GM12878 (cell line): ENCODE measurements at regions of chr2 and their contacts with region 1.

Region 1: DNA sequence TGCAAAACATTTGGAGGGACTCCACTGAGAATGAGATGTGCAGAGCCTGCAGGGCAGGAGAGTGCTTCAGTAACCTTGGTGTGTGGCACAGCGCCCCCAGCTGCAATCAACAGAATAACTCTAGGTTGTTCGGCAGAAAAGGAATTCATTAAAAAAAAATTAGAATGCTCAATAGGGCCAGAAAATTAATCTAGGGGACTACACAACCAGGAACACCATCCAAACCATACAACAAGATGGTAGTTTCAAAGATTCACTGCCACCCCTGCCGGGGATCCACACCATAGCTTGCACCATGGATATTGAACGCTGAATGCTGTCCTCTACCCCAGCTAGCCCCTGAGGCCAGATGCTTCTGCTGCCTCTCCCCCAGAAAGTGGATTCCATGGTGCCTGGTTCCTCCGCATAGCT is 50.1 kb downstream of the THUMPD2 start:
- DNase-seq: no peak
- ATAC-seq: peak; percentile 86
- H3K4me3 ChIP-seq: no peak overlapping the region
- H3K27ac ChIP-seq: no peak overlapping the region
- H3K4me1 ChIP-seq: no peaks in the 10 kb centered on the region
- H3K27me3 ChIP-seq: no peaks in the 10 kb centered on the region
- CTCF ChIP-seq: peak; percentile 60 to 76 (median 75)
- EP300 ChIP-seq: no peak
- POLR2A ChIP-seq: no peak
- RAD21 ChIP-seq: peak; percentile 59

Region 2: GRCh38 chr2:39069136-39069515 is 659.8 kb before region 1 on chr2:
- CTCF ChIA-PET with region 1: no interaction called
- POLR2A ChIA-PET with region 1: no interaction called
- RAD21 ChIA-PET with region 1: no interaction called
- SMC1A ChIA-PET with region 1: no interaction called
- in situ Hi-C with region 1: loop called (anchors 25 kb)
- intact Hi-C with region 1: loop called (anchors 5 kb)
- DNase-seq: no peak
- ATAC-seq: no peak
- H3K4me3 ChIP-seq: no peak overlapping the region
- H3K27ac ChIP-seq: no peak overlapping the region
- H3K4me1 ChIP-seq: no peaks in the 10 kb centered on the region
- H3K27me3 ChIP-seq: no peaks in the 10 kb centered on the region
- CTCF ChIP-seq: no peak; a peak in 1 of 6 replicates
- EP300 ChIP-seq: no peak
- POLR2A ChIP-seq: no peak
- RAD21 ChIP-seq: peak; percentile 32; the same call in 1 of the 2 replicates

Region 3: GRCh38 chr2:39394516-39394961 is 334.4 kb before region 1 on chr2:
- CTCF ChIA-PET with region 1: interaction called, 12 read pairs
- POLR2A ChIA-PET with region 1: no interaction called
- RAD21 ChIA-PET with region 1: no interaction called
- SMC1A ChIA-PET with region 1: no interaction called
- in situ Hi-C with region 1: loop called (anchors 10 kb)
- intact Hi-C with region 1: no loop called
- DNase-seq: no peak
- ATAC-seq: no peak
- H3K4me3 ChIP-seq: no peak overlapping the region
- H3K27ac ChIP-seq: no peak overlapping the region
- H3K4me1 ChIP-seq: no peaks in the 10 kb centered on the region
- H3K27me3 ChIP-seq: no peaks in the 10 kb centered on the region
- CTCF ChIP-seq: no peak
- EP300 ChIP-seq: no peak
- POLR2A ChIP-seq: no peak
- RAD21 ChIP-seq: no peak

Region 4: DNA sequence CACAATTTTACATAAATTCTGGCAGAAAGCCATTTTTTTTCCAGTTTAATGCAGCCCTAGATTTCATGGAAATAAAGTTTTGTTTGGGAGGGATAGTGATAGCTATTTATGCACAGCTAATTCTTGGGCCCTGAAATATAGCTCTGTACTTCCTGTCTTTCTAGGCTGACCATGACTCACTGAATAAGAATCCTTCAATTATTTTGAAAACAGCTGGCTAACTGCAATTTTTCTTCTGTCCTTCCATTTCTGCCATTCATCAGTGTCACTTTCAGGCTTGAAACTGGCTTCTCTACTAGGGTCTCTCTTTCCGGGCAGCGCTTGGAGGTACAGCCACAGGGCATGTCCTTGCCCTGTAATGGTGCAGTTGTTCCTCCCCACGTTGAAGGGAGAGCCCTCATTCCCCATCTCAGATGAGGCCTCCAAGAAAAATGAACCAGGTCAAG is 160.4 kb before region 1 on chr2:
- CTCF ChIA-PET with region 1: no interaction called
- POLR2A ChIA-PET with region 1: no interaction called
- RAD21 ChIA-PET with region 1: no interaction called
- SMC1A ChIA-PET with region 1: no interaction called
- in situ Hi-C with region 1: no loop called
- intact Hi-C with region 1: no loop called
- DNase-seq: no peak
- ATAC-seq: no peak
- H3K4me3 ChIP-seq: no peak overlapping the region
- H3K27ac ChIP-seq: no peak overlapping the region
- H3K4me1 ChIP-seq: no peaks in the 10 kb centered on the region
- H3K27me3 ChIP-seq: 0 out of 4 replicates have a peak, but pooled peaks cover 0 to 2% of the 10 kb centered on the region in 2 experiments
- CTCF ChIP-seq: no peak
- EP300 ChIP-seq: no peak
- POLR2A ChIP-seq: no peak
- RAD21 ChIP-seq: no peak

Region 5: DNA sequence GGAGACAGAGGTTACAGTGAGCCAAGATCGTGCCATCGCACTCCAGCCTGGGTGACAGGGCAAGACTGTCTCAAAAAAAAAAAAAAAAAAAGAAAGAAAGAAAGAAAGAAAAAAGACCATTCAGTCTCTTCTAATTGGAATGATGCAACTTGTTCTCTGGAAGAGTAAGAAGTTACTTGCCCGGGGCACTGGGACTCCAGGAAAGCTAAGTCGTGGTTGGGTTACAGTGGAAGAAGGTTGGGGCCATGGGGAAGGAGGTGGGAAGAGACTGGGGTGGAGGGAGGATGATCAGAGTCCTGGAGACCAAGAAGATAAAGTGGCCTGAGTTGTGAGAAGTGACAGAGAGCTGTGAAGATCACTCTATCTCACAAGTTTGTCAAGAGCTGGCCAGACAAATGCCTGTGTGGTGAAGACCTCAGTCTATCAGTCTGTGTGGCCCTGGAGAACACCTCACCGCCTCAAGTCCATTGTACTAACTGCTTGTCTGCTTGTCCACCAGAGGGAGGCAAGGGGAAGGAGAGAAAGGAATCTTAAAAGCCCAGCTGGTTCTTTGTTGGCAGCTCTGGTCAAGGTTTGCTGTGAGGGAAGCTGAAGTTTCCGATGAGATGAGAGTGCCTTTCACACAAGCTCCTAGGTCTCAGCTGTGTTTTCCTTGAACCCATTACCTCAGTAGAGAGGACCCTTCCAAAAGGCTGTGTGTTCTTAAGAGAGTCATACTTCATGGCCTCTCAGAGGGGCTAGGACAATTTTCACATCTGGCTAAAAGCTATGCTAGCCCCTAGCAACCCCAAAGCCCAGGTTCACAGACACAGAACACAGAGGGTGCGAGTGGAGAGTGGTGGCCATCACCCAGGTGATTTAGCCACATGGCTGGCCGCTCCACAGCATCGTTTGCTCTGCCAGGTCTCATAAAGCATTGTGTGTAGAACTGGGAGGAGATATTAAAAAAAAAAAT is 135.2 kb before region 1 on chr2:
- CTCF ChIA-PET with region 1: interaction called, 13 read pairs
- POLR2A ChIA-PET with region 1: no interaction called
- RAD21 ChIA-PET with region 1: interaction called, 3 read pairs
- SMC1A ChIA-PET with region 1: no interaction called
- in situ Hi-C with region 1: no loop called
- intact Hi-C with region 1: no loop called
- DNase-seq: no peak
- ATAC-seq: peak; percentile 48
- H3K4me3 ChIP-seq: no peak overlapping the region
- H3K27ac ChIP-seq: no peak overlapping the region
- H3K4me1 ChIP-seq: no peaks in the 10 kb centered on the region
- H3K27me3 ChIP-seq: no peaks in the 10 kb centered on the region; a peak in 2 of 4 replicates
- CTCF ChIP-seq: peak; percentile 20 to 39 (median 26); a peak in 3 of 6 replicates
- EP300 ChIP-seq: no peak
- POLR2A ChIP-seq: no peak
- RAD21 ChIP-seq: 0 out of 2 replicates have a peak, but pooled peaks have one; percentile 30

Region 6: GRCh38 chr2:39679805-39680204 is 49.1 kb before region 1 on chr2:
- CTCF ChIA-PET with region 1: no interaction called
- POLR2A ChIA-PET with region 1: no interaction called
- RAD21 ChIA-PET with region 1: no interaction called
- SMC1A ChIA-PET with region 1: no interaction called
- in situ Hi-C with region 1: no loop called
- intact Hi-C with region 1: no loop called
- DNase-seq: no peak
- ATAC-seq: no peak
- H3K4me3 ChIP-seq: no peak overlapping the region
- H3K27ac ChIP-seq: no peak overlapping the region
- H3K4me1 ChIP-seq: no peaks in the 10 kb centered on the region
- H3K27me3 ChIP-seq: no peaks in the 10 kb centered on the region
- CTCF ChIP-seq: no peak
- EP300 ChIP-seq: no peak
- POLR2A ChIP-seq: no peak
- RAD21 ChIP-seq: no peak

Region 7: DNA sequence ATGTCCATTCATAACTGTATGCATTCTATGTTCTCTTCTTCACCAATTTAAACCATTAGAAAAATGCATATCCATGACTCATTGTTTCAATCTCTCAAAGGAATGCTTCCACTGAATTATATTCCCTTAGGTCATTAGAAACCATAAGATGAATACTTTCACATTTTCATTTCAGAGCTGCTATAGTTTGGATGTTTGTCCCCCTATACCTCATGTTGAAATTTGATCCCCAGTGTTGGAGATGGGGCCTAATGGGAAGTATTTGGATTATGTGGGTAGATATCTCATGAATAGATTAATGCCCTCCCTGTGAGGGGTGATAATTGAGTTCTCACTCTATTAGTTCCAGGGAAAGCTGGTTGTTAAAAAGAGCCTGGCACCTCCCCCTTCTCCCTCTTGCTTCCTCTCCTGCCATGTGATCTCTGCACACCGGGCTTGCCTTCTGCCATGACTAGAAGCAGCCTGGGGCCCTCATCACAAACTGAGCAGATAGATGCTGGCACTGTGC is 14.4 kb after region 1 on chr2:
- CTCF ChIA-PET with region 1: interaction called, 63 read pairs
- POLR2A ChIA-PET with region 1: no interaction called
- RAD21 ChIA-PET with region 1: no interaction called
- SMC1A ChIA-PET with region 1: interaction called, 10 read pairs
- in situ Hi-C with region 1: no loop called
- intact Hi-C with region 1: no loop called
- DNase-seq: no peak
- ATAC-seq: no peak
- H3K4me3 ChIP-seq: no peak overlapping the region
- H3K27ac ChIP-seq: no peak overlapping the region
- H3K4me1 ChIP-seq: no peaks in the 10 kb centered on the region
- H3K27me3 ChIP-seq: no peaks in the 10 kb centered on the region
- CTCF ChIP-seq: no peak
- EP300 ChIP-seq: no peak
- POLR2A ChIP-seq: no peak
- RAD21 ChIP-seq: no peak

Region 8: GRCh38 chr2:40028792-40029488 is 300.0 kb after region 1 on chr2:
- CTCF ChIA-PET with region 1: no interaction called
- POLR2A ChIA-PET with region 1: no interaction called
- RAD21 ChIA-PET with region 1: no interaction called
- SMC1A ChIA-PET with region 1: no interaction called
- in situ Hi-C with region 1: no loop called
- intact Hi-C with region 1: no loop called
- DNase-seq: peak; percentile 5
- ATAC-seq: peak; percentile 59
- H3K4me3 ChIP-seq: no peak overlapping the region
- H3K27ac ChIP-seq: no peak overlapping the region
- H3K4me1 ChIP-seq: peaks cover 11% of the 10 kb centered on the region
- H3K27me3 ChIP-seq: no peaks in the 10 kb centered on the region
- CTCF ChIP-seq: no peak
- EP300 ChIP-seq: no peak
- POLR2A ChIP-seq: no peak
- RAD21 ChIP-seq: no peak